Calu3 (cell line): ENCODE measurements at regions of chr6 and their contacts with region 1.

Region 1: GRCh38 chr6:48765352-48765961 is 654.5 kb upstream of the PTCHD4 start:
- DNase-seq: peak; percentile 47
- H3K4me3 Mint-ChIP-seq: no peak overlapping the region
- H3K27ac Mint-ChIP-seq: peak overlapping the region; percentile 54
- H3K4me1 Mint-ChIP-seq: peaks cover 18% of the 10 kb centered on the region
- H3K27me3 Mint-ChIP-seq: no peaks in the 10 kb centered on the region
- CTCF ChIP-seq: peak; percentile 46

Region 2: GRCh38 chr6:47787620-47788497 is 977.6 kb before region 1 on chr6:
- CTCF ChIA-PET with region 1: interaction called, 13 read pairs
- intact Hi-C with region 1: loop called (anchors 2 kb)
- DNase-seq: peak; percentile 70
- H3K4me3 Mint-ChIP-seq: no peak overlapping the region
- H3K27ac Mint-ChIP-seq: no peak overlapping the region
- H3K4me1 Mint-ChIP-seq: peaks cover 6% of the 10 kb centered on the region
- H3K27me3 Mint-ChIP-seq: no peaks in the 10 kb centered on the region
- CTCF ChIP-seq: peak; percentile 89

Region 3: GRCh38 chr6:48318670-48319069 is 446.8 kb before region 1 on chr6:
- CTCF ChIA-PET with region 1: no interaction called
- intact Hi-C with region 1: loop called (anchors 10 kb)
- DNase-seq: no peak
- H3K4me3 Mint-ChIP-seq: no peak overlapping the region
- H3K27ac Mint-ChIP-seq: no peak overlapping the region
- H3K4me1 Mint-ChIP-seq: no peaks in the 10 kb centered on the region
- H3K27me3 Mint-ChIP-seq: no peaks in the 10 kb centered on the region
- CTCF ChIP-seq: no peak

Region 4: GRCh38 chr6:48535582-48536009 is 229.9 kb before region 1 on chr6:
- CTCF ChIA-PET with region 1: no interaction called
- intact Hi-C with region 1: loop called (anchors 10 kb)
- DNase-seq: peak; percentile 55
- H3K4me3 Mint-ChIP-seq: no peak overlapping the region
- H3K27ac Mint-ChIP-seq: no peak overlapping the region
- H3K4me1 Mint-ChIP-seq: peaks cover 10% of the 10 kb centered on the region
- H3K27me3 Mint-ChIP-seq: peaks cover 20% of the 10 kb centered on the region
- CTCF ChIP-seq: no peak

Region 5: DNA sequence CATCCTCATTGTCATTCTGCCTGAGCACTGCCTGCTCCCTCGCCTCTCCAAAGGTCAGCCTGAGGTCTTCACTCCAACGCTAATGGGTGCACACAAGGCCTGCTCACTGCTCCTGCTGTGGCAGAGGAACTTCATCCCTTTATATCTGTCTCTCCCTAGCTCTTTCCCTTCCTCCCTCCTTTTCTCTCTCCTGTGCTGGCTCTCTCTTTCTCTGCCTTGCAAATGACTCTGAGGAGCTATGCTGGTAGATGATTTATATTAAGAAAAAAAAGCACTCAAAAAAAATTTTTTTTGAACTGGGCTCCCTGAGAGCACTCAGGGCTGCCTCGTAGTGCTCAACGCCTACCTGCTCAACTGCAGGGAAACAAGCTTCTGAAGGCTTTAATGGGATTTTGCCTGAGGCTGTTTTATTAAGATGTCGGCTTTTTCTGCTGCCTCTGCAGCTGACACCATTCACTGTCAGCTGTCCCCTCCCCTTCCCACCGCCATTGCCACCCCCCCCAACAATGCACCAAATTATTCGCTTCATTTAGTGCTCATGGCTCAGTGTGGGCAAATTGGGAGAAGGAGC is 1422.0 kb after region 1 on chr6:
- CTCF ChIA-PET with region 1: interaction called, 12 read pairs
- intact Hi-C with region 1: no loop called
- DNase-seq: no peak
- H3K4me3 Mint-ChIP-seq: no peak overlapping the region
- H3K27ac Mint-ChIP-seq: no peak overlapping the region
- H3K4me1 Mint-ChIP-seq: no peaks in the 10 kb centered on the region
- H3K27me3 Mint-ChIP-seq: no peaks in the 10 kb centered on the region
- CTCF ChIP-seq: no peak